ENCODE measurements at regions of chr9 and their contacts with region 1.

Region 1: DNA sequence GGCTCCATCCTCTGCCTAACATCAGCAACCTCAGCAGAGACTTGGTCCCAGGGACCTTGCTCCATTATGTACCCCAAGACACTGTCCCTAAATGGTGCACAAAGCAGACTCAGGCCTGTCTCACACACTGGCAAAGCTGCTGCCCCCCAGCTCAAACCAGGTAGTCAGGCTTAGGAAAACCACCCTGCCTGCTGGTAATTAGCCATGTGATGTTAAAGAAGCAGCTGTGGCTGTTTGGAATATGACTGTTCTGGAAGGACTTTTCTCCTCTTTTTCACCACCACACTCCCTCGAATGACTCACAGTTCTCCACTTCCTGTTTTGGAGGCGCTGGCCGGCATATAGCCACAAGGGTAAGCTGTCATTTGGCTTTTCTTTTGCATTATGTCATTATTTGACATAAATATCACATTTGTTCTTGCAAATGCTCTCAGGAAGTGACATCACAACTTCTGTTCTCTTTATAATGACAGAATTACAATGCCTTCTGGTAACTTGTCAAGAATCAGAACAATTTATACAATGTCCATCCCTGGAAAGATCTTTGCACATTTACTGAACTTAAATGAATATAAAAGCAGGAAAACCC is 113.9 kb downstream of the SUSD1 start:
- DNase-seq: peak; percentile 38
- H3K4me3 Mint-ChIP-seq: no peak overlapping the region
- H3K27ac Mint-ChIP-seq: peak overlapping the region; percentile 4
- H3K4me1 Mint-ChIP-seq: peaks cover 27% of the 10 kb centered on the region
- H3K27me3 Mint-ChIP-seq: no peaks in the 10 kb centered on the region

Region 2: DNA sequence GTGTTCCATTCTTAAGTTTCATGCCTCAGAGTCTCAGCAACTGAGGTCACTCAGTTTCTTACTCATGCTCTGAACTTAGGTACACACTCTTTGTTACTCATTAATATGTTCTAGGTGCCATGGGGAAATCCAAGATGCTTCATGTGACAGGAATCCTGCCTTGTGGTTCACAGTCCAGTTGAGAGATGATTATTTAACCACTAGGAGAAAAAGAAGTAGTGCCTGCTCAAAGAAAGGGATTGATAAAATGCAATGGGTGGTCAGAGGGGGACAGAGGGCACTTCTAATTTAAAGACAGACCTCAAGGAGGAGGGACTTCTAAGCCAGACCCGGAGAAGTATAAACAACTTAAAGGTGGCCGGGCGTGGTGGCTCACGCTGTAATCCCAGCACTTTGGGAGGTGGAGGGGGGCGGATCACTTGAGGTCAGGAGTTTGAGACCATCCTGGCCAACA is 95.7 kb before region 1 on chr9:
- intact Hi-C with region 1: no loop called
- DNase-seq: no peak
- H3K4me3 Mint-ChIP-seq: no peak overlapping the region
- H3K27ac Mint-ChIP-seq: peak overlapping the region; percentile 65
- H3K4me1 Mint-ChIP-seq: peaks cover 7% of the 10 kb centered on the region
- H3K27me3 Mint-ChIP-seq: peaks cover 12% of the 10 kb centered on the region

Region 3: DNA sequence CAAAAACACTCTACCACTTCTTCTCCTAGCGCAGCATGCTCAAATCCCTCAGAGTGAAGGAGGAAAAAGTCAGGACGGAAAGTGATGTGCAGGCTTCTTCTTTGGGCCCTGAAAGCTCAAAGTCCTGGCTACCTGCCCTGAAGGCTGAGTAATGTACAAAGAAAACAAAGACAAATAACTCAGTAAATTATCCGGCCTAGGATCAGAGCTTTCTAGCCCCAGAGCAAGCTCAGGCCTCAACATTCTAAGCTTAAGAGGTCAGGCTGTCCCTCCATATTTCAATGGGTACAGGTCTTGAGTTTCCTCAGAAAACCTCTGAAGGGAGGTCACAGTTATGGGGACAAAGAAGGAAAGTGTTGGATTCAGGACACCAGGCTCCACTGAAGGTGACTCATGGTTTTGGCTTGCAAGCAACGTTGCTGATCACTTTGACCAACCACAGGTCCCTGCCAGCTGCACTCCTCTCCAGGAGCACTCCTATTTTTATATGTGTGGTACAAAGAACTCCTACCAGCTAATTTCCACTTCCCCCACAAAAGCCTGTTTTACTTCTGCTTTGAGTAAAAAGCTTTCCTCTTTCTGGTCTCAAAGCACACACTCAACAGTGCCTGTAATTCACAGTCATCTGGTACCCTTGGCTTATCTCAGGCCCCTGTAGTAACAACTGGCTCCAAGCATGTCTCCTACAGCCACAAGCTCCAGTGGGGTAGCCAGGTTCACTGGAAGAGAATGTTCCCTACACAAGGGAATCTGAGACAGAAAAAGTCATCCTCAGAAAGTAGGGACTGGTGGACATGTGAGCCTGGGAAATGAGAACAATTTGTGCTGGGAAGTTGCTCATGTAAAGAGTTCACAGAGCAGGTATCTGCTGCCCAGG is 49.0 kb before region 1 on chr9:
- intact Hi-C with region 1: loop called (anchors 1 kb)
- DNase-seq: no peak
- H3K4me3 Mint-ChIP-seq: no peak overlapping the region
- H3K27ac Mint-ChIP-seq: no peak overlapping the region
- H3K4me1 Mint-ChIP-seq: peaks cover 21% of the 10 kb centered on the region
- H3K27me3 Mint-ChIP-seq: peaks cover 50% of the 10 kb centered on the region

Region 4: DNA sequence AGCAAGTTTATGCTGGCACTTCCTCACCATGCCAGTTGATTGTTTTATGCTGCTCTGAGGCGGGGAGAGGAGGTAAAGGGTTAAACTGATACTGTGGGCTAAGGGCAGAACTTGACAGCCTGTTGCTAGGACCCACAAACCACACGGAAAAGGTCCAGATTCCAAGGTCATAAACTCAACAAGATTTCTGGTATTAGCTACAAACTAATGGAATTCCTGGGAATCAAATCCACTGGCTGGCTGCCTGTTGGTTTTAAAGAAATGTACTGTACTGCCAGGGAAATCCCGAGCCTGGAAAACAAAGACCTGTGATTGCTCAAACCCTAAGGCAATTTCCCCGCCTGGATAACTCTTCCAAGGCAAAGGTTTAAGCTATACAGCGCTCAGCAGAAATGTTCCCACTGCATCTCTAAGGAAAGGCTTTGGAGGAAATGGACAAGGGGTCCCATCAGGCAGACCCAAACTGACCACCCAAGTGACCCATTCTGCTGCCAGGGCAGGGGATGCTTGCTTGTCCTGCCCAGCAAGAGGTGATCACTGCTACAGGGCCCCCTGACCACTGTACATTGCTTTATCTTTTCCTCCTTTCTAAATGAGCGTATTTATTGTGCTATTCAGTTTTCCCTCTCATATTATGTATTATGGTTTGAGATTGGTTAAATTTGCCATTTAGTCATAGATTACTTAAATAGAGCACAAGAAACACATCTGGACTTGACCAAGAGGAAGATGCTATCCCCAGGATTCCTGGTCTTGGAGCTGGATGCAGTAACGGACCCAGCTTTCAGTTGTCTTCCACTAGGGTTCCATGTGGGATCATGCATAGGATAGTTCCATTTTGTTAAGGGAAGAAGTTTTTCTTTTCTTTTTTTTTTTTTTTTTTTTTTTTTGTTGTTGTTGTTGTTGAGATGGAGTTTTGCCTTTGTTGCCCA is 10.4 kb before region 1 on chr9:
- intact Hi-C with region 1: no loop called
- DNase-seq: no peak
- H3K4me3 Mint-ChIP-seq: no peak overlapping the region
- H3K27ac Mint-ChIP-seq: no peak overlapping the region
- H3K4me1 Mint-ChIP-seq: peaks cover 17% of the 10 kb centered on the region
- H3K27me3 Mint-ChIP-seq: no peaks in the 10 kb centered on the region

Measured in activated T-helper 1 cell treated with anti-CD3 and anti-CD28 coated beads, Interleukin-12 subunit alpha, Interleukin-12 subunit beta, Interleukin-2, Interleukin-4 antibody, amounts not matched to agents 30 ng/mL and 10 ng/mL and 1 ng/mL, durations not matched to agents 14 hours and 24 hours and 36 hours (primary cell).